ENCODE measurements at regions of chr19 and their contacts with region 1.

Region 1: DNA sequence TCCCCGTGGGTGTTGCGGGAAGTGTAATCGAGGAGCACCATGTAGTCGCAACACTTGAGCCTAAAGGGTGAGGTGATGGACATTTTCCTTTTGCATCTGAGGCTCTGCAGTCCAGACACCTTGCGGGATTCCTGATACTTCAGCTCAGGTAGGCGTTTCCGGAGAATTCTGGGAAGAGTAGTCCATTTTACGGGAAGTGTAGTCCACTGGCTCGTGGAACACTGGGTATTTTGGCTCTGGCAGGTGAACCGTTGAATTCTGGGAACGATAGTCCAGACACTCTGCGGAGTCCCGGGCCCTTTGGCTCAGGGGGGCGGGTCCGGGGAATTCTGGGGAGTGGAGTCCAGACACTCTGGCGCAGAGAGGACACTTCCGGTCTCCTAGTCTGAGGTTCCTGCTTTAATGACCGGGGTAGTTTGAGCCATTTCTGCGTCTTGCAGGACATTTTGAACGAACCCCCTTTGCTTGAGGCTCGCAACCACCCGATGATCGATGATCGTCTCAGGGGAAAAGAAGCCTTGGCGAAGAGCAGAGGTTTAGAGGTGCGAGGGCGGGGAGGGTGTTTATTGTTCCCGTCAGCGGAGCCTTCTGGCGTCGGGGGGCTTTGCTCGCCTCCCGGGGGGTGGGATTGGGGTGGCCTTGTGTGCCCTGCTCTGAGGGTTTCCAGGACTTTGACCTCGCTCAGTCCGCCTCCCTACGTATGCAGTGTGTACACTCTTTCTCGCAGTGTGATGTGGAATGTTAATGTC is at the start of gene ZNF223:
- DNase-seq: peak; percentile 92 to 99 (median 97)

Region 2: DNA sequence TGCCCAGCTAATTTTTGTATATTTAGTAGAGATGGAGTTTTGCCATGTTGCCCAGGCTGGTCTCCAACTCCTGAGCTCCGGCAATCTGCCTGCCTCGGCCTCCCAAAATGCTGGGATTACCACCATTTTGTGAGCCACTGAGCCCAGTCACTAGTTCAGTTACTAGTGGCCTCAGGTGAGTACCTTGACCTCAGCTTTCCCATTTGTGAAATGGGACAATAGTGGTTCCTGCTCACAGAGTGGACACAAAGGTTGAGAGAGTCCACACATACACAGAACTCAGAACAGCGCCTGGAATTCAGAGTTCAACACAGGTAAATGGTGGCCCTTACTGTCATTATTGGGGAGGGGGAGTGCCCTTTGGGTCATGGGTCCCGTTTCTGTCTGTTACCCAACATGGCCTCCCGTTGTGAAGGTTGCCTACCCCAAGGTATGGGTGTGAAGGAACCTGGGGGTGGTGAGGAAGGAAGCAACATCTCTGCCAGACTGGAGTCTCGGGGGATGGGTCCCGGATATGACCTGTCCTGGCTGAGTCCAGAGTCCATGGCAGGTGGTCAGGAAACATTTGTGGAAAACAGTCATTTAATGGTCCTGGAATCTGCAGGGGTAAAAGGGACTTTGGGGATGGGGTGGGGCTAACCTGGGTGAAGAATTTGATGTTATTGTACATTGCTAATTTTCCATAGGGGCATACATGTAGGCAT is 347.7 kb before region 1 on chr19:
- intact Hi-C with region 1: no loop called
- DNase-seq: no peak

Region 3: GRCh38 chr19:43934985-43935708 is 116.7 kb before region 1 on chr19 and contains the start of gene ZNF45:
- intact Hi-C with region 1: loop called (anchors 10 kb)
- DNase-seq: peak; percentile 88 to 98 (median 94)

Region 4: DNA sequence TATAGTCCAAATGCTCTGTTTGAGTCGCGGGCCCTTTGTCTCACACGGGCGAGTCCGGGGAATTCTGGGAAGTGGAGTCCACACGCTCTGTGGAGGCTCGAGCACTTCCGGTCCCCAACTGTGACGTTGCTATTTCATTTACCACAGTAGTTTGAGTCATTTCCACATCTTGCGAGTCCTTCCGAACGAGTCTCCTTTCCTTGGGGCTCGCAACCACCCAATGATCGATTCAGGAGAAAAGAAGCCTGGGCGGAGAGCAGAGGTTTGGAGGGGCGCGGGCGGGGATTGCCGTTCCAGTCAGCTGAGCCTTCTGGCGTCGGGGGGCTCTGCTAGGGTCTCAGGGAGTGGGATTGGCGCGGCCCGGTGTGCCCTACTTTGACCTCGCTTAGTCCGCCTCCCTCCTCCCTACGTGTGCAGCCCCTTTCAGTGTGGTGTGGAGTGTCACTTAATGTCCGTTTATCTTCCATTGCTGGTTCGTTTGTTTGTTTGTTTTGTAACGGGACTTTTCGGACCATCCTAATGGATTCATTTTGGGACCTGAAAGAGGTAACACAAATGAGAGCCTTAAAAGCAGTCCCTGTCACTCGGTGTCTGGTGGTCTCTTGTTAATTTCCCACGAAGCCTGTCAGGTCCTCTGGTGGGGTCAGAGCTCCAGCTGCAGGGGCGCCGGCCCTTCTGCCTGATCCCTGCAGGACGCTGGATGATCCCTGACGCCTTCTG is 26.5 kb before region 1 on chr19 and contains the start of gene ZNF222:
- intact Hi-C with region 1: no loop called
- DNase-seq: peak; percentile 77 to 96 (median 89)

Region 5: GRCh38 chr19:44071824-44072542 is 20.2 kb after region 1 on chr19 and contains the start of gene ZNF284:
- intact Hi-C with region 1: loop called (anchors 2 kb)
- DNase-seq: peak; percentile 84 to 97 (median 93)

Region 6: GRCh38 chr19:44093931-44094765 is 42.3 kb after region 1 on chr19 and contains the start of gene ZNF224:
- intact Hi-C with region 1: loop called (anchors 5 kb)
- DNase-seq: peak; percentile 89 to 98 (median 95)

Region 7: GRCh38 chr19:44164673-44165512 is 113.1 kb after region 1 on chr19 and contains the start of gene ZNF226:
- intact Hi-C with region 1: no loop called
- DNase-seq: peak; percentile 85 to 99 (median 96)